ENCODE measurements at regions of chr1 and their contacts with region 1.

Region 1: DNA sequence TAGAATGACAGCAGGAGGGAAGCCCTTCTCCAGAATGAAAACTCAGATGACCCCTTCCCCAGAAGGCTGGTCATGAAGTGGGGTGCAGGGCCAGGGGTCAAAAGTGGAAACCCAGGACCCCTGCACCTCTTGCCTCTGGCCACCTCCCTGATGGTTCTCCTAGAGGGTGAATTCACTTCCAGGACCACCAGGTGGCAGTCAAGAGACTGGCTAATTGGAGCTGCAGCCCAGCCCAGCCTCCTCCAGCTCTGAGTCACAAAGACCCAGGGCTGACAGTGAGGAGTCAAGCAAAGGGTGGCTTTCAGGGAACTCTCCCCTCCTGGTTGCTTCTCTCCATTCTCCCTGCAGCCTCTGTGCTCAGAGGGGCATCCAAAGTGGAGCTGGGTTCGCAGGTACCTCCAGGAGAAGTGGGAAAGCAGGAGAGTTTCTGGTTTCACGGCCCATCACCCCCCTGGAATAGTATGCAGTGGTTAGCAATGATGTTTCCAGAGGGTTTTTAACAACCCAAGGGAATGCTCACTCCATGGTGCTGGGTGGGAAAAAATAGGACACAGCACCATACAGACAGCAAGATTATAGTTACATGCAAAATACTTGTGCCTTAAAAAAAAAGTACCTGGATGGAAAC is 6.1 kb upstream of the EPHB2 start:
- DNase-seq: peak; percentile 91
- H3K4me3 Mint-ChIP-seq: no peak overlapping the region
- H3K27ac Mint-ChIP-seq: no peak overlapping the region
- H3K4me1 Mint-ChIP-seq: no peaks in the 10 kb centered on the region
- H3K27me3 Mint-ChIP-seq: peaks cover 20% of the 10 kb centered on the region

Region 2: DNA sequence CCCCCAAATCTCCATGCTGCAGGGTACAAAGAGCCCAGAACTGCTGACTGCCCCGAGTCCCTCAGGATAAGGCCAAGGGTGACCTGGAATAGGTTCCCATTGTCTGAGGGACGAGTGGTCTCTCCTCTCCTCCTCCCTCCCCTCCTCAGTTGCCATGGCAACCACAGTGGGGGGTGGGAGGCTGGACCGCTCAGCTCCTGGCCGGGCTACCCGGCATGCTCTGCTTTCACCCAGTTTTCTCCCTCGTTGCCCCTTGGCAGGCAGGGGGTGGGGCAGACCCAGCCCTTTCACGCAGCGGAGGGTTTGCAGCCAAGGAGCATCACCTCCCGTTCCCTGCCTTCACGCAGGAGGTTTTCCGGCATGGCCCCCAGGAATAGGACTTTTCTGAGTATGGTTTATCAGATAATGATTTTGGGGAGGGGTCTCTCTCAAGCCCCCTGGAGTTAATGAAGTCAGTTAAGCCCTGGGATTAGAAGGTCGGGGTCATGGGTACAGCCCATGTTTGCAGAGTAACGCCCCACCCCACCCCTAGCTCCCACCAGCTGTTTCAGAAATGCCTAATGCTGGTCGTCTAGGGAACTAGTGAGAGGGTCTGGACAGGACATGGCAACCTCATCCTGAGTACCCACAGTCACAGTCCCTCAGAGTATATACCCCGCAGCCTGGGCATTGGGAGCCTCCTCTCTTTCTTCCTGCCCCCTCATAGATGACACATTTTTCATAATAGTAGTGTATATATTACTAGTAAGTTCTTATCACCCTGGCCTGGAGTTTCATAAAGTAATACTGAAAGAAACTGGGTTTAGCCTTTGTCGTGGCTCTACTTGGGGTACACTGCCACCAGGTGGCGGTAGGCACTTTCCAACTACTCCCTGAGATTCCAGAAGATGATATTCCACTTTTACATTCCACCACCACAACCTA is 30.8 kb before region 1 on chr1:
- CTCF ChIA-PET with region 1: interaction called, 11 read pairs
- intact Hi-C with region 1: no loop called
- DNase-seq: peak; percentile 45
- H3K4me3 Mint-ChIP-seq: no peak overlapping the region
- H3K27ac Mint-ChIP-seq: no peak overlapping the region
- H3K4me1 Mint-ChIP-seq: no peaks in the 10 kb centered on the region
- H3K27me3 Mint-ChIP-seq: peaks cover 31% of the 10 kb centered on the region

Region 3: DNA sequence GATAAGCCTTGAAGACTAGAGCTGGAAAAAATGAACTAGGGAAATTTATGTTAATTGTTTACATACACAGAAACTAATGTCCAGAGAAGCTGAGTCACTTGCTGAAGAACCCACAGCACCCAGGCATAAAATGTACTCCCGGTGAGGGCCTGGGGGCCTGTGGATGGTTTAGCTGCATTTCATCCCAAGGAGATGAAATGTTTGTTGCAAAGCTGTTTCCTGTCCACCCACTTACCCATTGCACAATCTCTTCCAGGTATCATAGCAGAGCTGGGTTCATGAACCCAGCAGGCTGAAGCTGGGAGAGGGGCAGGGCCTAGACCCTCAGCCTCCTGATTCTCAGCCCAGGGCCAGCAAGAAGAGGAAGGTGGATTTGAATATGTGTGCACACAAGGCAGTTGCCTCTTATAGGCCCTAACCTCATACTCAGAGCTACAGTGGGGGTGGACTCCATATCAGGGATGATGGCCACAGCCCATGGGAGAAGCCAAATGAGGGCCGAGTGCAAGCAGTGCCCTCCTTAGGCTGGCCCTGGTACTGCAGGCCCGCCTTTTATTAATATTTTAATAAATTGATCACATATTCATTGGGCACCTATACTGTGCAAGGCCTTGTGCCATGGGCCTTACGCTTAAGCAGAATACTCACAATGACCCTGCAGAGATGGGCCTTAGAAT is 157.3 kb after region 1 on chr1:
- CTCF ChIA-PET with region 1: interaction called, 11 read pairs
- intact Hi-C with region 1: loop called (anchors 1 kb)
- DNase-seq: peak; percentile 17
- H3K4me3 Mint-ChIP-seq: no peak overlapping the region
- H3K27ac Mint-ChIP-seq: no peak overlapping the region
- H3K4me1 Mint-ChIP-seq: no peaks in the 10 kb centered on the region
- H3K27me3 Mint-ChIP-seq: peaks cover 8% of the 10 kb centered on the region

Region 4: DNA sequence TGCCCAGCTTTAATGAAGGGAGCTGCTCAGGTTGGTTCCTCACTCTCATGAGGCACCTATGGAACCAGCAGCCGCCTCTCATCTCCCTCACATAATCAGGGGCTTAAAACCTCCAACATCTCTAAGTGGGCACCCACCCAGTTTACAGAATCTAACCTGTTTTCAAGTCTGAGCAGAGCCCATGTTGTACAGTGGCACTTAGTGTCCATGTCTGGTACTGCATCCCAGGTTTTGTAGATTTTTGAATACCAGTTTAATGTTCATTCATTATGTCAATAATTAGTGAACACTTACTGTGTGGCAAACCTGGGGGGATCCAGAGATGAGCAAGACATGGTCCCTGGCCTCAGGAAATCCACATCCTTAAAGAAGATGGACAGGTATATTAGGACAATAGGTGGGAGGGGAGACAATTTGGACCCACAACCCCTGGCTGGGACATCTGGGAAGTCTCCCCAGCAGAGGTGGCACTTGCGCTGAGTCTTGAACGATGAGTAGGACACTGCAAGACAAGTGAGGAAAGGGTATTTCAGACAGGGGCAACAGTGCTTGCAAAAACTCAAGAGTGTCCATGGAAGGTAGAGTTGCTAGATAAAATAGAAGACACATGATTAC is 184.8 kb after region 1 on chr1:
- CTCF ChIA-PET with region 1: interaction called, 5 read pairs
- intact Hi-C with region 1: loop called (anchors 1 kb)
- DNase-seq: no peak
- H3K4me3 Mint-ChIP-seq: no peak overlapping the region
- H3K27ac Mint-ChIP-seq: no peak overlapping the region
- H3K4me1 Mint-ChIP-seq: peaks cover 6% of the 10 kb centered on the region
- H3K27me3 Mint-ChIP-seq: peaks cover 5% of the 10 kb centered on the region

Region 5: DNA sequence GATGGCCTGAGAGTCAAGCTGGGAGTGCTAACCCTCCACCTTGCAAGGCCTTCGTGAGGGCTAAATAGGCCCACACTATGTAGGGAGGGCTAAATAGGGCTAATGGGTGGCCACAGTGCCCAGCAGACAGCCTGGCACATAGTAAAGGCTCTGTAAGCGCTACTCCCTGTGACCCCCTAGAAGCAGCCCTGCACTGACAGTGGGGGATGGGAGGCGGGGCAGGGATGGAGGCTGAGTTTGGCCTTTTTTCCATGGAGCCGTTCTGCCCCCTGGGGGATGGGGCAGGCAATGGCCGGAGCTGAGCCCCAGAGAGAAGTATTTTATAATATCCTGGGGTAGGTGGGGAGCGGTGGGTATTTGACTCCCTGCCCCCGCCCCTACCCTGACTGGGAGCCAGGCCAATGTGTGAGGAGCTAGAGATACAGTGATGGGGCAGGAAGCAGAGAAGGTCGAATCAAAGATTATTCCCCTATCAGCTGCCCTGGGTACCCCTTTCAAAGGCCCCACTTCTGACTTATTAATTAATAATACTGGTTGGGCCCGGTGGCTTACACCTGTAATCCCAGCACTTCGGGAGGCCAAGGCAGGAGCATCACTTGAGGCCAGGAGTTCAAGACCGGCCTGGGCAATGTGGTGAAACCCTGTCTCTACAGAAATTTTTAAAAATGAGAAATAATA is 225.8 kb after region 1 on chr1:
- CTCF ChIA-PET with region 1: interaction called, 6 read pairs
- intact Hi-C with region 1: loop called (anchors 1 kb)
- DNase-seq: peak; percentile 47
- H3K4me3 Mint-ChIP-seq: no peak overlapping the region
- H3K27ac Mint-ChIP-seq: no peak overlapping the region
- H3K4me1 Mint-ChIP-seq: no peaks in the 10 kb centered on the region
- H3K27me3 Mint-ChIP-seq: peaks cover 9% of the 10 kb centered on the region

Region 6: DNA sequence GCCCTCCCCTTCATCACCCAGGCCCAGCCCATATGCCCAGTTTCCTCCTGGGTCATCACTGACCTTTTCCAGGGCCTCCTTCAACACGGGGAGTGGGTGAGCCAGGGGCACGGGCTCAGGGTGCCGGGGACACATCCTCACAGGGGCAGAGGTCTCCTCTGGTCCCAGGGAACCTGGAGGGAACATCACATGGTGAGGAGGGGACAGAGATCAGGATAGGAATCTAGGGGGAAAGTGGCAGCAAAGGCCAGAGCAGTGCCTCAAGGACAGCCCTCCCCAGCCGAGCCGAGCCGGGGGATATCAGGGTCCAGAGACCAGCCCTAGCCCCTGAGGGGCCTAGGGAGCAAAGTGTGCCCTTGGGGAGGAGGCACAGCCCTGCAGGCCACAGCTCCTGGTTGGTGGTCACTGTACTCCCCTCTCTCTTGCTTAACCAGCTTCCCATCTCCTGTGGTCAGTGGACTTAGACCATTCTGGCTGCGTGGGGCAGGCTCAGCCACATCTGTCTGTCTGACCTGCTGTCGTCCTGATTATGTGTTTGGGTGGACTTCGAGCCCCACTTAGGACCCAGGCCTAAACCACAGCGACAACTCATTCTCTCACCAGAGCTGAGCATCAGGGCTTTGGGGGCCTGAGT is 258.6 kb after region 1 on chr1:
- CTCF ChIA-PET with region 1: interaction called, 18 read pairs
- intact Hi-C with region 1: loop called (anchors 1 kb)
- DNase-seq: no peak
- H3K4me3 Mint-ChIP-seq: no peak overlapping the region
- H3K27ac Mint-ChIP-seq: no peak overlapping the region
- H3K4me1 Mint-ChIP-seq: no peaks in the 10 kb centered on the region
- H3K27me3 Mint-ChIP-seq: peaks cover 5% of the 10 kb centered on the region

Region 7: DNA sequence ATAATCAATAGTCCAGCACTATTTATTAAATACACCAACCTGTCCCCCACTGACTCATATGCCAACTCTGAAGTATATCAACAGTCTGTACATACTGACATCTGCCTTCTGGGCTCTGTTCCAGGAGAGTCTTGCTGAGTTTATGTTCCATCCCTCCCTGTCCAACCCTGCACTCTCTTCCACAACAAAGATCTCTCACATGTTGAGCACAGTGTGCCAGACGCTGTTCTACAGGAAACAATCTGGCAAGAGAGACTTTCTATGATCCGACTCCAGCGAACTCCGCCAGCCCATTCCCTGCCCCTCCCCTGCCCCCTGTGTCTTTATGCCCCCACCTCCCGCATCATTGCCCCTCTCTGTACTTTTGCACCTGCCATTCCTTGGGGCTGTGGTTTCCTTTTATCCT is 264.8 kb after region 1 on chr1:
- CTCF ChIA-PET with region 1: interaction called, 18 read pairs
- intact Hi-C with region 1: loop called (anchors 1 kb)
- DNase-seq: no peak
- H3K4me3 Mint-ChIP-seq: no peak overlapping the region
- H3K27ac Mint-ChIP-seq: no peak overlapping the region
- H3K4me1 Mint-ChIP-seq: no peaks in the 10 kb centered on the region
- H3K27me3 Mint-ChIP-seq: peaks cover 25% of the 10 kb centered on the region

Measured in activated naive CD4-positive, alpha-beta T cell treated with anti-CD3 and anti-CD28 coated beads for 36 hours (primary cell).